Mammary epithelial cell (primary cell): ENCODE measurements at regions of chr6 and their contacts with region 1.

Region 1: DNA sequence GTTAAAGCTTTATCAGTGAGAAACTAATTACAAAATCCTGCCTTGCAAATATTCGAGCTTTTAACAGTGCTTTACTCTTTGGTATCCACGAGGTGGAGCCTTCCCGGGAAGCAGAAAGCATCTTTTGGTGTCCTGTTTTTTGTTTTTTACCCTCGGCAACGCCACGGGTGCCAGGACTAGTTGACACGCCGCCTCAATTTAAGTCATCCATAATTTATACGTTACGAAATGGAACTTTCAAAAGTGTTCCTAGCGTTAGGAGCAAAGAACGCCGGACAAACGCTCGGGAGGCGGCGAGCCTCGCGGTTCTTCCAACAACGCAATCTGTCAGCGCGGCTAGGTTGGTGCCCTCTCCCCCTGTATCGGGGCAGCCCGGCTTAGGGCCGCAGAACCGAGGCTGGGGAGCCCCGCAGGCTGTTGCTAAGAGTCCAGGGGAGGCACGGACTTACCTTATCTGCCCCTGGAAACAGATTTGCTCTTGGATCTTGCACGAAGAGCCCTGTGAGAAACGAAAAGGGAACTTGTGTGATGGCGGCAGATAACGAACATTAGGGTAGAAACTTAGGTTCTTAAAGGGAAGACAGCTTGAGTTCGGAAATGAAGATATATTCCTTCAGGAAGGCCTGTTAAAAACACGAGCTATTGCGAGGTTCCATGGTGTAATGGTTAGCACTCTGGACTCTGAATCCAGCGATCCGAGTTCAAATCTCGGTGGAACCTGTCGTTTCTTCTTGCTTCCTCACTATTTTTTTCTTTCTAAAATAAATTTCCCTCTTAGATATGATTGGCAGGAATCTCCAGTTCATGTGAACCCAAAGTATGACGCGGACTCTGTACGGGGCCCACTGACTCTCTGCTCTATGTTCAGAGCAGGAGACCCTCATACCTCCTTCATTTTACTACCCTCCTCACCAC is 46.2 kb upstream of the ZNF184 start:
- DNase-seq: peak; percentile 86
- H3K4me3 ChIP-seq: peak overlapping the region; percentile 45 to 67 (median 55)
- H3K27ac ChIP-seq: peak overlapping the region; percentile 52
- H3K4me1 ChIP-seq: peaks cover 15% of the 10 kb centered on the region
- H3K27me3 ChIP-seq: peaks cover 3% of the 10 kb centered on the region
- CTCF ChIP-seq: peak; percentile 76 to 77

Region 2: DNA sequence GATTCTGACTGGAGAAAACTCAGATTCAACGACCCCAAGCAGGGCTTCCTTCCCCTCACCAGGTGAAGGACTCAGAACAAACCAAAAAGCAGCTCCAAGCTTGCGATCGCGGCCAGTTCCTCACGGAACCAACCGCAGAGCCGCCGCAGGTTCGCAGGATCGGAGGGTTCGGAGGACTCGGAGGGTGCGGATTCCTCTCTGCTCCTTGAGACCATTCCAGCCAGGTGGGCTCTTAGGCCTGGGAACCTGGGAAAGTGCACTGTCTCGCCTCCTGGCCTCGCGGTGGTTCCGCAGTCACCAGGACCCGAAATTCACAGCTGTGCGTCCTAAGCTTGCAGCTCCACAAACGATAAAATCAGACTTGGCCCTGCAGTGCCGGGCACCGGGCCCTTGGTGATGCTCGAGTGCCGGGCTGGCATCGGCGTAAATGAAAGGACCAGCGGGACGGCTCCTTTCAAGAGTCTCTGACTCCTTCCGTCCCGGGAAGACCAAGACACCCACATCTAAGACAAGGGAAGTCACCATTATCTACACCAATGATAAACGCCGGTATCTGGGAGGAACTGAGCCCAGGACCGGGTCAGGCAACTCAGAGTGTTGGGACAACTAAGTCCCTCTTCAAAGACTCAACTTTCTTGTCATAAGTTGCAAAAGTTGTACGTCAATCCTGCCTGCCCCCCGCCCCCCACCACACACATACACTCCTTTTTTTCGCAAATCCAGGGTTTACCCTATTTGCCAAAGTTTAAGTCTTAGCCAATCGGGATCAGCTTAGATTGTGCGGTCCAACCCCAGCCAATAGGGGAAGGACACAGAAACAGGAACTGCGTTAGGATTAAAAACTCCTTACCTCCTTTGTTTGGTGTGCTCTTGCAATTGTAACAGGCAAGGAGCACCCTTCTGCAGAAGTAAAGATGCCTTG is 341.4 kb before region 1 on chr6:
- CTCF ChIA-PET with region 1: no interaction called
- dilution Hi-C with region 1: no loop called
- in situ Hi-C with region 1: loop called in 1 of 2 experiments (anchors 25 kb)
- intact Hi-C with region 1: no loop called
- DNase-seq: peak; percentile 88
- H3K4me3 ChIP-seq: peak overlapping the region; percentile 80 to 100 (median 96)
- H3K27ac ChIP-seq: peak overlapping the region; percentile 62
- H3K4me1 ChIP-seq: peaks cover 3% of the 10 kb centered on the region
- H3K27me3 ChIP-seq: no peaks in the 10 kb centered on the region
- CTCF ChIP-seq: peak; percentile 53 to 69

Region 3: DNA sequence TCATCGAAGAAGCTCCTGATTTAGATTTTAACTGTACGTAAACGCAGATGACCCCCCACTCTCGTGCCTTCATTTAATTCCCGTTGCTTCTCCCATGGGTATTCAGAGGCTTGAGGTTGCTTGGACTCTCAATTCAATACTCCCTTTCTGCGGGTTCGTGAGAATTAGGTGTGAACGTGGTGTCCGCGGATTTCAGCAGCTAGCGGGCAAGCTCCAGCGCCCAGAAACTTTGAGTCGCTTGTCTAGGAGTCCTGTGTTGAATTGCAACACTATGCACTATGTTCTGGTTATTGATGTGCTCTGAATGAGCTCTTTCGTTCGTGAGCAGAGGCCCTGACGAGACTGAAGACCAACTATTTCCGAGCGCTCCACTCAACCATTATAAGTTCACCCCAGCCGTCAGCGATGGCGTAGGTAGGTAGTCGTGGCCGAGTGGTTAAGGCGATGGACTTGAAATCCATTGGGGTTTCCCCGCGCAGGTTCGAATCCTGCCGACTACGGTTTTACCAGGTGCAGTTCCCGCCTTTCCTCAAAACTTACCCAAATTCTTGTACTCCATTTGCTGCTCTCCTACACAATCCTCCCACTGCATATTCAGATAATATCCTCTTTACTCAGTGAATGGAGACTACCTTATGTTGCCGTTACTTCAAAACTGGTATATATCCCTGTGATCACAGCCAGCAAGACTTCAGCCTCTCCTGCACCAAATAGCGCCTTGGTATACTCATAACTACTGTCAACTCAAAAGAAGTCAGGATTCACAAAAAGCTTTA is 26.3 kb after region 1 on chr6:
- CTCF ChIA-PET with region 1: interaction called, 3 read pairs
- dilution Hi-C with region 1: no loop called
- in situ Hi-C with region 1: no loop called
- intact Hi-C with region 1: loop called (anchors 2 kb)
- DNase-seq: peak; percentile 93
- H3K4me3 ChIP-seq: peak overlapping the region; percentile 51 to 60 (median 56)
- H3K27ac ChIP-seq: peak overlapping the region; percentile 61
- H3K4me1 ChIP-seq: peaks cover 6% of the 10 kb centered on the region
- H3K27me3 ChIP-seq: no peaks in the 10 kb centered on the region
- CTCF ChIP-seq: no peak

Region 4: DNA sequence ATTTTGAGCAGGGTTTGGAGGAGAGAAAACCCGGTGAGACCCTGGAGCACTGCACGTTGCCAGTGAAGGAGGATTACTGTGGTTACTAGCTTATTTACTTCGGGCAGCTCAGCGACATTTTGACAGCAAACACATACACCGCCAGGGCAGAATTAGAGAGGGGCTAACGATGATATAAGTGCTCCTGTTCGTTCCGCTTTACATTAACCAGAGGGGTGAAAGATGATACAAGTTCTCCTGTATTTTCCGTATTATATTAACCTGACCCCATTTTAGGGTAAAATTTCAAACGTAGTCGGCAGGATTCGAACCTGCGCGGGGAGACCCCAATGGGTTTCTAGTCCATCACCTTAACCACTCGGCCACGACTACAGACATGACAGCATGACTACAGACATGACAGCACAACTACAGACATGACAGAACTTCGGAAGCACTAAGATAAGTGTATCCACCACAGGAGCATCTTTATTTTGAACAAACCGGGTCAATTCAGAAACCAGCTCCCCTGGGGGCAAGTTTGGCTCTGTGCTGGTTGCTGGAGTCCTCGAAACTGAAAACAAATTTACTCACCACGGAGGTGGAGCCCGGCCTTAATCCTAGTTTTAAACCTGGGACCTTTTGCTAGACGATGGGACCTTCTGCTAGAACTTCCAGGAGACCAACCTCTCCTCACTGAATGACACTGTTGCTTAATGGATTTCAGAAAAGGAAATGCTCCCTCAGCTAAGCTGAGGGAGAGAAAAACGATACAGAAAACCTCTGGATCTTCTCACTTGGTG is 34.2 kb after region 1 on chr6:
- CTCF ChIA-PET with region 1: interaction called, 3 read pairs
- dilution Hi-C with region 1: no loop called
- in situ Hi-C with region 1: no loop called
- intact Hi-C with region 1: loop called (anchors 1 kb)
- DNase-seq: peak; percentile 80
- H3K4me3 ChIP-seq: peak overlapping the region; percentile 24 to 42 (median 38)
- H3K27ac ChIP-seq: no peak overlapping the region
- H3K4me1 ChIP-seq: no peaks in the 10 kb centered on the region
- H3K27me3 ChIP-seq: no peaks in the 10 kb centered on the region
- CTCF ChIP-seq: no peak

Region 5: GRCh38 chr6:27592481-27593199 is 73.5 kb after region 1 on chr6:
- CTCF ChIA-PET with region 1: interaction called, 6 read pairs
- dilution Hi-C with region 1: no loop called
- in situ Hi-C with region 1: no loop called
- intact Hi-C with region 1: loop called (anchors 1 kb)
- DNase-seq: peak; percentile 84
- H3K4me3 ChIP-seq: peak overlapping the region; percentile 43 to 62 (median 48)
- H3K27ac ChIP-seq: no peak overlapping the region
- H3K4me1 ChIP-seq: peaks cover 13% of the 10 kb centered on the region
- H3K27me3 ChIP-seq: no peaks in the 10 kb centered on the region
- CTCF ChIP-seq: no peak

Region 6: DNA sequence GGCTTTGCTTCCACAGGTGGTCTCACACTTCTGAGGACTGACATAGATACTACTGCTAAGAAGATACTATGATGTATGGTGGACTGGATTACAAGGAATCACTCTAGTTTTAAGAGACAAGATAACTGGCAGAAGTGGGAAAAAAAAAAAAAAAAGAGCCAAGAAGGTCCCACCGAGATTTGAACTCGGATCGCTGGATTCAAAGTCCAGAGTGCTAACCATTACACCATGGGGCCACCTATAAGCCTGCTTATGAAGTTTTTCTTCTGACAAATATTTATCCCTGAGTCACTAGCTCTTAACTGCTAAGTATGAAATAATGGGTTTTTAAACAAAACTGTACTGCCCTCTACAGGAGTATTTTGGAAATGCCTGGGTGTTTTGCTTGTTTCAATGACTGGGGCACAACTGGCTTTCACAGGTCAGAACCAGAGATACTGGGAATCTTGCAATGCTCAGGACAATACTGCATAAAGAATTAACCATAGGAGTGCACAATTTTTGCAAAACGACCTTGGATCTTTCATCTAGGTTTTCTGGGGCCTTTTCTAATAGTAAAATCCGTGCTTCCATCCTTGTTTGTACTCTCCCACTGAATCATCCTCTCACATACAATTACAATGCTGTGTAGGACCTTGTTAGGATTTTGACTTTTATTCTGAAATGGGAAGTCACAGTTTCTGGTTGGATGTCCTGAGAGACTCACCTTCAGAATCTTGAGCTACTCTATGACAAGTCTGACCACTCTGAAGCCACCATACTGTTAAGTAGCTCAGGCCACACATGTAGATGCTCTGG is 276.8 kb after region 1 on chr6:
- CTCF ChIA-PET with region 1: no interaction called
- dilution Hi-C with region 1: no loop called
- in situ Hi-C with region 1: no loop called
- intact Hi-C with region 1: loop called (anchors 1 kb)
- DNase-seq: peak; percentile 83
- H3K4me3 ChIP-seq: no peak overlapping the region
- H3K27ac ChIP-seq: no peak overlapping the region
- H3K4me1 ChIP-seq: peaks cover 8% of the 10 kb centered on the region
- H3K27me3 ChIP-seq: no peaks in the 10 kb centered on the region
- CTCF ChIP-seq: peak; percentile 74 to 87